HEK293 (cell line): ENCODE measurements at regions of chr20 and their contacts with region 1.

Region 1: GRCh38 chr20:37192137-37192854 is 12.9 kb upstream of the MROH8 start:
- H3K4me3 ChIP-seq: no peak overlapping the region
- H3K27ac ChIP-seq: no peak overlapping the region
- H3K4me1 ChIP-seq: no peaks in the 10 kb centered on the region
- CTCF ChIP-seq: peak; percentile 82

Region 2: GRCh38 chr20:36248836-36249235 is 943.5 kb before region 1 on chr20:
- CTCF ChIA-PET with region 1: no interaction called
- POLR2A ChIA-PET with region 1: no interaction called
- H3K4me3 ChIP-seq: no peak overlapping the region
- H3K27ac ChIP-seq: no peak overlapping the region
- H3K4me1 ChIP-seq: no peaks in the 10 kb centered on the region
- CTCF ChIP-seq: no peak

Region 3: GRCh38 chr20:37032077-37032476 is 160.2 kb before region 1 on chr20:
- CTCF ChIA-PET with region 1: no interaction called
- POLR2A ChIA-PET with region 1: no interaction called
- H3K4me3 ChIP-seq: no peak overlapping the region
- H3K27ac ChIP-seq: no peak overlapping the region
- H3K4me1 ChIP-seq: no peaks in the 10 kb centered on the region
- CTCF ChIP-seq: no peak

Region 4: DNA sequence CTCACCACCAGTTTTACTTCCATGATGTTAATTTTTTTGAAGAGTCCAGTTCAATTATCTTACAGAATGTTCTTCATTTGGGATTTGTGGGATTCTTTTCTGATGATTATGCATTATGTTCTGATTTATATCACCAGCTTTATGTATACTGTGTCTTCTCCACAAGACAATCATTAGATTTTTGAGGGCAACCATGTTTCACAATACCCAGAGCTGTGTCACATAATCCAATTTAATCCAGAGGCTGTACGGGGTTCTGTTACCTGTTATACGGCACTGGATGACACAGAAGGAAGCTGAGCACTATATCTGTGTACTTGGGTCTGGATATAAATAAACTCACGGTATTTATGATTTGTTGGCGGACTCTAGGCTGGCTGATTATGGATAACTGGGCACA is 54.7 kb before region 1 on chr20:
- CTCF ChIA-PET with region 1: no interaction called
- POLR2A ChIA-PET with region 1: no interaction called
- H3K4me3 ChIP-seq: no peak overlapping the region
- H3K27ac ChIP-seq: no peak overlapping the region
- H3K4me1 ChIP-seq: no peaks in the 10 kb centered on the region
- CTCF ChIP-seq: no peak

Region 5: GRCh38 chr20:37178839-37179670 is 13.2 kb before region 1 on chr20 and contains the starts of genes MROH8 and RPN2:
- CTCF ChIA-PET with region 1: interaction called, 52 read pairs
- POLR2A ChIA-PET with region 1: interaction called, 26 read pairs
- H3K4me3 ChIP-seq: peak within 1 kb of the TSS; percentile 71
- H3K27ac ChIP-seq: peak within 1 kb of the TSS; percentile 79
- H3K4me1 ChIP-seq: no peaks in the 10 kb centered on the region
- CTCF ChIP-seq: no peak

Region 6: DNA sequence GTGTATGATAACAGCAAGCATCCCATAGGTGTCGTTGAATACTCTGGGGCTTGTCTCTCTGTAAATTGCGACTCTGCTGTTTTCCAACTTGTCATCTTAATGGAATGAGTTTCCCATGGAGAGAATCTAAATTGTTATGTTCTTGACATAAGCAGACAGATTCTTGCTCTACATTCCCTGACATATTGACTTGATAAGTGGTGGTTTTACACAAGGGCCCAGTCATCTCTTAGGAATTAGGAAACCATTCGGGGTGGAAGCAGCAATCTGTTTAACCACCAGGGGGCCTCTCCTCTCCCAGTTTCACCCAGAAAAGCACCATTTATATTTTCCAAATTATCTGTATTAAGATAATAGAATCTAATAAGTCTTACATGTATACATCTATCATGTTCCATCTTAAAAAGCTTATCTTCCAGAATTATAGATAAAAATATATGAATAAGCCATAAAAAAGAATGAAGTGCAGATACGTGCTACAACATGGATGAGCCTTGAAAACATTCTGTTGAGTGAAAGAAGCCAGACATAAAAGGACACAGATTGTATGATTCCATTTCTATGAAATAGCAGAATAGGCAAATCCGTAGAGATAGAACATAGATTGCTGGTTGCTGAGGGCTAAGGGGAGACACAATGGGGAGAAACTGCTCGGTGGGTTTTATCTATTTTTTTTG is 10.1 kb after region 1 on chr20:
- CTCF ChIA-PET with region 1: interaction called, 65 read pairs
- POLR2A ChIA-PET with region 1: no interaction called
- H3K4me3 ChIP-seq: no peak overlapping the region
- H3K27ac ChIP-seq: no peak overlapping the region
- H3K4me1 ChIP-seq: no peaks in the 10 kb centered on the region
- CTCF ChIP-seq: peak; percentile 68; the same call in 1 of the 2 replicates

Region 7: DNA sequence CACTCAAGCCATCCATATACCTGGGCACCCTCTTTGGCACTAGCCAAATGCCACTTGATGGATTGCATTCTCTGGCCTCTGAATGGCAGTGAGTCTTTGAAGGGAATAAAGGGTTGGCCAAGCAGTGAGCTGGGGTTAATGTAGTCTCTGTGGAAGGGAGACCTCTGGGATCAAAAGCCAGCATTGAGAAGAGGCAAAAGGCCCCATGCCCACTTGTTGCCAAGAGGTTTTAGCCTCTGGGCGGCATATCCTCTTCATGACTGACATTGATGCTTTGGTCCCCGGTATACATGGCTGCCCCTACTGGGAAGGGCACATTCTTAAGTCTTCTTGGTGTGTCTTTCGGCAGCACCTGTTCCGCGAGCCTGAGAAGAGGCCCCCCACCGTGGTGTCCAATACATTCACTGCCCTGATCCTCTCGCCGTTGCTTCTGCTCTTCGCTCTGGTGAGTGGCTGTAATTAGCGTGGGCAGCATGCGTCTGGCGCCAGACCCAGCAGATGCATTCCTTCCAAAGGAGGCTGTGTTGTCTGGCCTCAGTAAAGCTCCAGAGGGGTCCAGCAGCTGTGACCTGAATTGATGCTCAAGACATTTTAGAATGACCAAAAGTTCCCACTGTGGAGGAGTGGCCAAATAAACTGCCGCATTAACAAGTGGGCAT is 39.8 kb after region 1 on chr20:
- CTCF ChIA-PET with region 1: interaction called, 10 read pairs
- POLR2A ChIA-PET with region 1: no interaction called
- H3K4me3 ChIP-seq: no peak overlapping the region
- H3K27ac ChIP-seq: no peak overlapping the region
- H3K4me1 ChIP-seq: no peaks in the 10 kb centered on the region
- CTCF ChIP-seq: no peak

Region 8: DNA sequence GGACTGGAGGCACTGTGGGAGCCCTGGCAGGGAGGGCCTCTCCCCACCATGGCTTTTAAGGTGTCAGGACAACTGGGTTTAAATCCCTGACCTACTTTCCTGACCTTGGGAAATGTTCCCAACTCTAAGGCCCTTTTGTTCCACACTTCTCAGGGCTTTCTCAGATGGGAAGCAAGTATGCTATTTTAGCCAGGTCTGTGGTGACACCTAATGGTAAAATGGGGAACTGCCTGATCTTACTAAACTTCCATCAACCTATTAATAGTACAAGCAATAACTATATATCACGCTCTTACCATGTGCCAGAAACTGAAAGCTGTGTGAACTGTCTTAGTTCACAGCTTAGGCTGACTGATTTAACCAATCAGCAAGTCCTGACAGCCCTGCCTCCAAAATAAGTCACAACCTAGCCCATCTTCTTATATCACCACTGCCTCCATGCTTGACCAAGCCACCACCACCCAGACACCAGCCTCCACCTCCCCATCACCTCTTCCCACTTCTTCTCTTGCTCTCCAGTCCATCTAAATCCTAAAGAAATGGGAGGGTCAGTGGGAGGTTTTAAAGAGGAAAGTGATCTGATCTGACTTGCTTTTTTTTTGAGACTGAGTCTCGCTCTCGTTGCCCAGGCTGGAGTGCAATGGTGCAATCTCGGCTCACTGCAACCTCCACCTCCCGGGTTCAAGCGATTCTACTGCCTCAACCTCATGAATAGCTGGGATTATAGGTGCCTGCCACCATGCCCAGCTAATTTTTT is 342.3 kb after region 1 on chr20:
- CTCF ChIA-PET with region 1: interaction called, 19 read pairs
- POLR2A ChIA-PET with region 1: no interaction called
- H3K4me3 ChIP-seq: no peak overlapping the region
- H3K27ac ChIP-seq: no peak overlapping the region
- H3K4me1 ChIP-seq: no peaks in the 10 kb centered on the region
- CTCF ChIP-seq: peak; percentile 65; the same call in 1 of the 2 replicates